Activated CD4-positive, alpha-beta memory T cell treated with anti-CD3 and anti-CD28 coated beads, Interleukin-2, amount 10 ng/mL, durations not matched to agents 7 days and 5 days (primary cell): ENCODE measurements at regions of chr11 and their contacts with region 1.

Region 1: DNA sequence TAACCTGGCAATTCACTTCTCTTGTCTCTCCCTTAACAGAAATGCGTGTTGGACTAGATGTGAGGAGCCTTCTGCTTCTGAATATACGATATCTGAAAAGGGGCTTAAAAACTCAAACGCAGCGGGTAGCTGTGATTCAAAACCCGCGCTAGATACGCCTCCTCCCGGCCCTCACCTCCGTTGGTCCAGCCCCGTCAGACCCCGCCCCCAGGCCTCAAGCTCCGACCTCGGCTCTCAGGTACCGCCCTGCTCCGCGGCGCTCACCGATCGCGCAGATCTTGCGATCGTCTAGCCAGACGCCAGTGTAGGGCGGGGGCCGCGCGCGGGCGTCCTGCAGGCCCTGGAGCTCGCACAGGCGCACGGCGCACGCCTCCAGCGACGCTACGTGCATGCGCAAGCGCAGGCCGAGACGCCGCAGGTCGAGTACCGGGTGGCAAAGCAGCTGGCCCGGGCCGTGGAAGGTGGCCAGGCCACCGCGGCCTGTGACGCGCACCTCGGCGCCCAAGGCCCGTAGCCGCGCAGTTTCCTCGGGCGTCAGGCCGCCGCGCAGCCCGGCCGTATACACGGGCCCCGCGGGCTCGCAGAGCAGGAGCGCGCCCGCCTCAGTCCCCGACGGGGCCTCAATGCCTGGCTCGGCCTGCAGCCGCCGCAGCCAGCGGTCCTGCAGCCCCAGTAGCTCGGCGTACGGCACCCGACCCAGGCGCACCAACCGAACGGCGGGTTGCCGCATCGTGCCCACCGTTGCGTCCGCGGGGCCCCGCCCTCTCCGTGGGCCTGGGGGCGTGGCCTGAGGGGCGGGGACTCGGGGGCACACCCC is at the start of gene LIPT2:
- DNase-seq: peak; percentile 98
- H3K4me3 Mint-ChIP-seq: peak within 1 kb of the TSS; percentile 81
- H3K27ac Mint-ChIP-seq: peak within 1 kb of the TSS; percentile 75
- H3K4me1 Mint-ChIP-seq: peaks cover 19% of the 10 kb centered on the region
- H3K27me3 Mint-ChIP-seq: no peaks in the 10 kb centered on the region
- total RNA-seq, gene LIPT2: 1.4 to 2.6 TPM

Region 2: DNA sequence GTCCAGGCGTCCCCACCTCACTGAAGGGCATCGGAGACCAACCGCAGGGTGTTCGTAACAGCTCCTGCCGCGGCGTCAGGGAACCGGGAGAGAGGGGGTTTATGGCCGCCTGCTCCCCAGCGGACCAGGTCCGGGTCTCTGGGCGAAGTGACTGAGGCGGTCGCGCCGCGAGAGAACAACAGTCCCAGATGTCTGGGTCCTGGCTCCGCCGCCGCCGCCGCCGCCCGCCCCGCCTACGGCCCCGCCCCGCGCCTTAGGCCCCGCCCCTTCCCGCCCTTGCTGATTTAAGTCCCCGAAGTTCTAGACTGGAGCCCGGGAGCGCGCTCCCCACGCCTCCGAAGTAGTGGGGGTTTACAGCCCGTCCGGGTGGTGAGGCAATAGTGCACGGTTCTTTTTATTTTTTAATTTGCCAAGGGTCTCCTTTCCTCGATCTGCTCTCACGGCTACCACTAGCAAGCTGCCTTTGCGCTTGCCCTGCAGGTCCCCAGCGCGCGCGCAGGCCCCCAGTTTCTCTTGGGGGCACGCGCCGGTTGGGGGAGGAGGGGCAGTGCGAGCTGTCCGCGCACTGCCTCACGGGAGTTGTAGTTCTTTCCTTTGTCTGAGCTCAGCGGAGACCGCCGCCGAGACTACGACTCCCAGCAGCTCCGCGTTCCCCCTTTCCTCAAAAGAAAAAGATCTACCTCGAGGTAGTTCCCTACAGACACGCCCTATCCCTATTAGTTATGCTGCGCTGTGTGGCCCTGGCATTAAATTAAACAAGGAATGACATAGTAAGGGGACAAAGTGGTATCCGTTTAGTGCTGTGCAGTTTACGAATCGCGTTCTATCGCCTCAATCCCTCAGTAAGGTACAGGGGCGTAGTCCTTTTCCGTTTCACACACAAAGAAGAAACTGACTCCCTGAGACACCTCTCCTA is 94.7 kb before region 1 on chr11 and contains the start of gene PGM2L1:
- CTCF ChIA-PET with region 1: interaction called, 5 read pairs
- POLR2A ChIA-PET with region 1: interaction called, 10 read pairs
- DNase-seq: peak; percentile 94
- H3K4me3 Mint-ChIP-seq: peak within 1 kb of the TSS; percentile 92
- H3K27ac Mint-ChIP-seq: peak within 1 kb of the TSS; percentile 95
- H3K4me1 Mint-ChIP-seq: peaks cover 16% of the 10 kb centered on the region
- H3K27me3 Mint-ChIP-seq: no peaks in the 10 kb centered on the region
- total RNA-seq, gene PGM2L1: 8.7 to 9.3 TPM

Region 3: DNA sequence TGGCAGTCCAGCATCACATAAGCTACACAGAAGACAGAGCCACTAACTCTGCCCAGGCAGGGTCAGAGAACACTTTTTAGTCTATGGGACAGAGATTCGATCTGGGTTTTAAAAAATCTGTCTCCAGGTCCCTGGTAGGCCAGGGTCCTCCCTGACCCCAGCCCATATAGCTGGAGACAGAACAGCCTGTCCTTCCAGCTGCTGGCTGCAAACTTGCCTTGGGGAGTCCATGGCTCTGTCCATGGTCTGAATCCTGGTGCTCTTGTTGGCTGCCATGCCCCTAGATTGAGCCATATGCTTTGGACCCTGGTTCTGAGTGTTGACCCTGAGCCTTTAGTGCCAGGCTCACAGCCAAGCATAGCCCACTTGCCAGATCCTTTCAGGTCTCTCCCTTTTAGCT is 13.6 kb after region 1 on chr11:
- CTCF ChIA-PET with region 1: interaction called, 6 read pairs
- POLR2A ChIA-PET with region 1: interaction called, 12 read pairs
- DNase-seq: no peak
- H3K4me3 Mint-ChIP-seq: no peak overlapping the region
- H3K27ac Mint-ChIP-seq: no peak overlapping the region
- H3K4me1 Mint-ChIP-seq: no peaks in the 10 kb centered on the region
- H3K27me3 Mint-ChIP-seq: no peaks in the 10 kb centered on the region

Region 4: DNA sequence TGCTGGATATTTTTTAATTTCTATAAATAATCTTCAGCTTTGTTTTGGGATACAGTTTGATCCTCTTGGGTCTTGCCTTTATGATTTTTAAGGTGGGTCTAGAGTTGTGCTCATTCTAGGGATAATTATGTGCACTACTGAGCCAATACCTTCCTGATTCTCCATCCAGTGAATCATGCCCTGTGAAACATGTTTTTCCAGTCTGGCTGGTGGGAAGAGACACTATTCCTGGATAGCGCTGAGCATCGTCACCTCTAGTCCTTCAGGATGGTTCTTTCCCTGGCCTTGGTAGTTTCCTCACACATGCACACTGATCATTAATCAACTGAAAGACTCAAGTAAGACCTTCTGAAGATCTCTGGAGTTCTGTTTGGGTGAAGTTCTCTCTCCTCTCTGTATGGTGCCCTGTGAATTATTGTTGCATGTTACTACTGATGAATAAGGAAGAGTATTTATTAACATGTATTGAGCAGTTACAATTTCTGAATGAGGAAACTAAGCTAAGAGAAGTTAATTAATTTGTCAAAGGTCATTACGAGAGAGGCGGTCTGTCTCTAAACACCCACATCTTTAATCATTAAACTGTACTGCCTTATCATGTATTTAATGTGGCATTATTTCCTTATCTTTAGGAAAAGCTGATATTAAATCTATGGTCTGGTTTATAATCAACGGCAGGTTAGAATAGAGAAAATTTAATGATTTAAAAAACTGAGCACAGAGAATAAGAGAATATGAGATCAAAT is 39.5 kb after region 1 on chr11:
- CTCF ChIA-PET with region 1: no interaction called
- POLR2A ChIA-PET with region 1: no interaction called
- DNase-seq: no peak
- H3K4me3 Mint-ChIP-seq: no peak overlapping the region
- H3K27ac Mint-ChIP-seq: no peak overlapping the region
- H3K4me1 Mint-ChIP-seq: peaks cover 4% of the 10 kb centered on the region
- H3K27me3 Mint-ChIP-seq: peaks cover 7% of the 10 kb centered on the region

Region 5: GRCh38 chr11:74592441-74593362 is 99.5 kb after region 1 on chr11 and contains the start of gene POLD3:
- CTCF ChIA-PET with region 1: no interaction called
- POLR2A ChIA-PET with region 1: interaction called, 37 read pairs
- DNase-seq: peak; percentile 95
- H3K4me3 Mint-ChIP-seq: peak within 1 kb of the TSS; percentile 91
- H3K27ac Mint-ChIP-seq: peak within 1 kb of the TSS; percentile 76
- H3K4me1 Mint-ChIP-seq: peaks cover 39% of the 10 kb centered on the region
- H3K27me3 Mint-ChIP-seq: peaks cover 5% of the 10 kb centered on the region
- total RNA-seq, gene POLD3: 46.5 to 47.5 TPM